ENCODE measurements at regions of chr11 and their contacts with region 1.

Region 1: GRCh38 chr11:67288452-67289225 is 464 bp upstream of the ANKRD13D start:
- DNase-seq: peak; percentile 89 to 94 (median 91)
- H3K4me3 ChIP-seq: peak overlapping the region; percentile 58 to 62
- H3K4me3 Mint-ChIP-seq: peak overlapping the region; percentile 79 to 90 (median 86)
- H3K27ac ChIP-seq: peak overlapping the region; percentile 88
- H3K27ac Mint-ChIP-seq: peak overlapping the region; percentile 95 to 100 (median 98)
- H3K4me1 ChIP-seq: peaks cover 77% of the 10 kb centered on the region
- H3K4me1 Mint-ChIP-seq: peaks cover 32 to 81% (median 46%) of the 10 kb centered on the region in 4 donors
- H3K27me3 ChIP-seq: no peaks in the 10 kb centered on the region
- H3K27me3 Mint-ChIP-seq: no peaks in the 10 kb centered on the region

Region 2: GRCh38 chr11:67277231-67277961 is 11.2 kb before region 1 on chr11:
- CTCF ChIA-PET with region 1: interaction called, 34 read pairs
- POLR2A ChIA-PET with region 1: interaction called, 1,163 read pairs
- intact Hi-C with region 1: loop called (anchors 1 kb)
- DNase-seq: peak; percentile 92 to 96 (median 93)
- H3K4me3 ChIP-seq: peak overlapping the region; percentile 63 to 71
- H3K4me3 Mint-ChIP-seq: peak overlapping the region; percentile 79 to 92 (median 83)
- H3K27ac ChIP-seq: peak overlapping the region; percentile 95
- H3K27ac Mint-ChIP-seq: peak overlapping the region; percentile 94 to 99 (median 97)
- H3K4me1 ChIP-seq: peaks cover 98% of the 10 kb centered on the region
- H3K4me1 Mint-ChIP-seq: peaks cover 25 to 90% (median 54%) of the 10 kb centered on the region in 4 donors
- H3K27me3 ChIP-seq: no peaks in the 10 kb centered on the region
- H3K27me3 Mint-ChIP-seq: no peaks in the 10 kb centered on the region

Region 3: GRCh38 chr11:67492801-67493547 is 204.3 kb after region 1 on chr11:
- CTCF ChIA-PET with region 1: no interaction called
- POLR2A ChIA-PET with region 1: no interaction called
- intact Hi-C with region 1: no loop called
- DNase-seq: no peak
- H3K4me3 ChIP-seq: no peak overlapping the region
- H3K4me3 Mint-ChIP-seq: no peak overlapping the region
- H3K27ac ChIP-seq: no peak overlapping the region
- H3K27ac Mint-ChIP-seq: peak overlapping the region in 1 of 7 donors; percentile 18
- H3K4me1 ChIP-seq: peaks cover 15% of the 10 kb centered on the region
- H3K4me1 Mint-ChIP-seq: peaks cover 6 to 18% (median 13%) of the 10 kb centered on the region in 4 donors
- H3K27me3 ChIP-seq: no peaks in the 10 kb centered on the region
- H3K27me3 Mint-ChIP-seq: no peaks in the 10 kb centered on the region

Measured in CD4-positive, alpha-beta memory T cell (primary cell).